Endothelial cell of umbilical vein (primary cell): ENCODE measurements at regions of chr18 and their contacts with region 1.

Region 1: DNA sequence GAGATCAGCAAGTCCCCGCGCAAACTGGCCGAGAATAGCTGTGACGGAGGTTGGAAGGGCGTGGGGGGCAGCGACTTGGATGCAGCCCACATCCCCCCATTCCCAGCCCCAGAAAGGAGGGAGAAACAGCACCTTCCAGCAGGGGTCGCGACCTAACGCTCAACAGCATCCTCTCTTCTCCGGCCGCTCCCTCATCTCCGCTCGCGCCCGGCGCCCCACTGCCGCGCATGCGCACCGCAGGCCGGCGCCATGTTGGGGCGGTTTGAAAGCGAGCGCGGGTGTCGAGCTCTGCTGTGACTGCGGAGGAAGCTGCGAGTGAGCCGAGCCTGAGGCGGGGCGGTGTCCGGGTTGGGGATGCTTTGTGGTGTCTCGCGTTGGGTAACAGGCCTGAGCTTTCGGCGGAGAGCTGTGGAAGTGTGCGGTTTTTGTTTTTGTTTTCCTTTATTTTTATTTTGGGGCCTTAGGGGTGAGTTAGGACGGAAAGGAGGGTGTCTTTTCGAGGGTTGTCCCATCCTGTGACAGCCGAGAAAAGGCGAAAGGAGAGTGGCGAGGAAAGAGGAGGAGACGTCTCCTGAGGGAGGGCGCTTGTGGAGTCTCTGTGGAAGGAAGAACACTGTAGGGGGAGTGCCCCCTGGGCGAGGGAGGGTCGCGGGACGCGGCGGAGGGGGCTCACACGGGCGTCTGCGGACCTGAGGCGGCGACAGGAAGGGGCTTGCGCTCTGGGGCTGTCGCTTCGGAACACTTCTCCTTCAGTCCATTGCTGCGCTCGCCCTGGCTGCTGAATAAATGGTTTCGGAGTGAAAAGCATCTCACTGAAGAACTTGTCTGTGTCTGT is at the starts of genes C18orf54 and STARD6:
- DNase-seq: peak; percentile 92
- H3K4me3 ChIP-seq: peak within 1 kb of the TSS; percentile 64 to 98 (median 79)
- H3K27ac ChIP-seq: peak within 1 kb of the TSS; percentile 51
- H3K4me1 ChIP-seq: peaks cover 11% of the 10 kb centered on the region
- H3K27me3 ChIP-seq: no peaks in the 10 kb centered on the region
- CTCF ChIP-seq: peak; percentile 22 to 23
- POLR2A ChIP-seq: peak; percentile 86
- total RNA-seq, gene C18orf54: 20.8 and 21.4 TPM in 2 replicates
- total RNA-seq, gene STARD6: not detected in 2 replicates

Region 2: GRCh38 chr18:54149078-54149697 is 208.7 kb before region 1 on chr18:
- CTCF ChIA-PET with region 1: no interaction called
- POLR2A ChIA-PET with region 1: no interaction called
- dilution Hi-C with region 1: no loop called
- intact Hi-C with region 1: loop called (anchors 2 kb)
- DNase-seq: peak; percentile 94
- H3K4me3 ChIP-seq: peak overlapping the region in 1 of 3 experiments; percentile 50
- H3K27ac ChIP-seq: peak overlapping the region; percentile 98
- H3K4me1 ChIP-seq: peaks cover 26% of the 10 kb centered on the region
- H3K27me3 ChIP-seq: no peaks in the 10 kb centered on the region
- CTCF ChIP-seq: no peak
- POLR2A ChIP-seq: no peak

Region 3: DNA sequence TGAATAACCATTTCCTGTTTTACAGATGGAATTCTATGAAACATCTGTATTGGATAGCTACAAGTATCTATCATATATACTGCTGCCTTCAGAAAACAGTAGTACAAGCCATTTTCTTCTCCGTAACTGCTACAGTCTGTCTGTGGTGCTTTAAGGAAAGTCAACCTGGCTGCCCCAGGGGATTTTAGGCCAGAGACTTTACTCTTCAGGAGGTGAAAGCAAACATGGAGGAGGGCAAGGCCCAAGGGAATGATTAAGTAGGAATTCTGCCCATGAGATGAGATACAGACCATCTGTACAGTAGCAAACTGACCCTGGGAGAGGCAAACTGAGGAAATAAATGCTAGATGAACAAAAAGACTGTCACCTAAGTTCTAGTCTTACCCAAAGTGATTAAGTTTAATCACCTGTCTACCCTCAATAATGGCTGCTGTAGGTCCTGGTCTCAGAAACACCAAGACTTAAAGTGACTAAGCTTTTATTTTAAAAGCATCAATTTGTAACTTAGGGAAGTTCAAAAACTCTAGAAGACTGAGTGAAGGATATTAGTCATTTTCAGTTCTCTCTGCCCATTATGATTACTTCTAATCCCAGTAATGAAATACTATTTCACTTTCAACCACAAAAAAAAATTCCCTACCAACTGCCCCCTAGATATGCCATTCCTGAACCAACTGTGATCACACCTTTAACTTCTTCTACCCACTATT is 148.3 kb before region 1 on chr18:
- CTCF ChIA-PET with region 1: no interaction called
- POLR2A ChIA-PET with region 1: no interaction called
- dilution Hi-C with region 1: no loop called
- intact Hi-C with region 1: no loop called
- DNase-seq: no peak
- H3K4me3 ChIP-seq: no peak overlapping the region
- H3K27ac ChIP-seq: peak overlapping the region; percentile 68
- H3K4me1 ChIP-seq: peaks cover 21% of the 10 kb centered on the region
- H3K27me3 ChIP-seq: no peaks in the 10 kb centered on the region
- CTCF ChIP-seq: no peak
- POLR2A ChIP-seq: no peak

Region 4: GRCh38 chr18:54335638-54336173 is 22.2 kb before region 1 on chr18:
- CTCF ChIA-PET with region 1: no interaction called
- POLR2A ChIA-PET with region 1: no interaction called
- dilution Hi-C with region 1: no loop called
- intact Hi-C with region 1: no loop called
- DNase-seq: no peak
- H3K4me3 ChIP-seq: no peak overlapping the region
- H3K27ac ChIP-seq: no peak overlapping the region
- H3K4me1 ChIP-seq: no peaks in the 10 kb centered on the region
- H3K27me3 ChIP-seq: peaks cover 0 to 2% of the 10 kb centered on the region in 2 experiments
- CTCF ChIP-seq: no peak
- POLR2A ChIP-seq: no peak